Activated naive CD4-positive, alpha-beta T cell treated with anti-CD3 and anti-CD28 coated beads for 36 hours (primary cell): ENCODE measurements at regions of chr11 and their contacts with region 1.

Region 1: DNA sequence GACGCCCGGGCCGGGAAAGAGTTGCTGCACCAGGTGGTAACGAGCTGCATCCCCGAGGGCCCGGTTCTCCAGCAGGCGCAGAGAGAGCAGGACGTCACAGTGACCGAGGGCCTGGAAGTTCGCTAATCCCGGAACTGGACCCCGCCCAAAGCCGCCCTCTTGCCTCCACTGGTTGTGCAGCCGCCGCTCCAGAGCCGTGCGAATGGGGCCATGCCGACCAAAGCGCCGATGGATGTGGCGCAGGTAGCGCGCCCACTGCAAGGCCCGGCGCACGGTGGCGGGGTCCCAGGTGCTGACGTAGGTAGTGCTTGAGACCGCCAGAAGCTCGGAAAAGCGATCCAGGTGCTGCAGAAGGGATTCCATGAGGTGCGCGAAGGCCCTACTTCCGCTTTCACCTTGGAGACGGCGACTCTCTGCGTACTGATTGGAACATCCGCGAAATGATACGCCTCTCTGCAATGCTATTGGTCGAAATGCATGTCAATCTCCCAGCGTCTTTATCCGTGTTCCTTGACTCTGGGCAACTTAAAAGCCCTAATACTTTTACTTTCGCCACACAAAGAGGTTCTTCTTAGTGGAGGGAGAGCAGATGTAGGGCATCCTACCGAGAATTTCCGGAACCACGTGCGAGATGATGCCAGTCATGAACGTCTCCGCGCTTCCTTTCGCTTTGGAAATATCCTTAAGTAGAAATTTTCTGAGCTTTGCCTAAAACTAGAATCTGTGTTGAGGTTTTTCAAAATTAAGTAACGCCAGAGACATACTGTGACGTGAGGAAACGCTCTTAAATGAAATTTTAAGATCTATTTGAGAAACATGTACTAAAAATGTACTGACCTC is at the start of gene FANCF:
- DNase-seq: peak; percentile 98
- H3K4me3 Mint-ChIP-seq: peak within 1 kb of the TSS; percentile 98
- H3K27ac Mint-ChIP-seq: peak within 1 kb of the TSS; percentile 97
- H3K4me1 Mint-ChIP-seq: peaks cover 41% of the 10 kb centered on the region
- H3K27me3 Mint-ChIP-seq: no peaks in the 10 kb centered on the region
- total RNA-seq, gene FANCF: 7.9 to 9.0 TPM

Region 2: GRCh38 chr11:22432291-22433093 is 193.2 kb before region 1 on chr11:
- CTCF ChIA-PET with region 1: no interaction called
- intact Hi-C with region 1: loop called (anchors 2 kb)
- DNase-seq: peak; percentile 39
- H3K4me3 Mint-ChIP-seq: peak overlapping the region; percentile 56
- H3K27ac Mint-ChIP-seq: no peak overlapping the region
- H3K4me1 Mint-ChIP-seq: peaks cover 17% of the 10 kb centered on the region
- H3K27me3 Mint-ChIP-seq: peaks cover 40% of the 10 kb centered on the region

Region 3: GRCh38 chr11:22635689-22636088 is 10.0 kb after region 1 on chr11:
- CTCF ChIA-PET with region 1: no interaction called
- intact Hi-C with region 1: no loop called
- DNase-seq: no peak
- H3K4me3 Mint-ChIP-seq: no peak overlapping the region
- H3K27ac Mint-ChIP-seq: no peak overlapping the region
- H3K4me1 Mint-ChIP-seq: no peaks in the 10 kb centered on the region
- H3K27me3 Mint-ChIP-seq: peaks cover 3% of the 10 kb centered on the region

Region 4: GRCh38 chr11:22690871-22691270 is 65.2 kb after region 1 on chr11:
- CTCF ChIA-PET with region 1: no interaction called
- intact Hi-C with region 1: loop called (anchors 2 kb)
- DNase-seq: peak; percentile 55
- H3K4me3 Mint-ChIP-seq: peak overlapping the region; percentile 52
- H3K27ac Mint-ChIP-seq: peak overlapping the region; percentile 65
- H3K4me1 Mint-ChIP-seq: peaks cover 16% of the 10 kb centered on the region
- H3K27me3 Mint-ChIP-seq: no peaks in the 10 kb centered on the region

Region 5: GRCh38 chr11:22730319-22730718 is 104.7 kb after region 1 on chr11:
- CTCF ChIA-PET with region 1: no interaction called
- intact Hi-C with region 1: loop called (anchors 1 kb)
- DNase-seq: peak; percentile 11
- H3K4me3 Mint-ChIP-seq: no peak overlapping the region
- H3K27ac Mint-ChIP-seq: no peak overlapping the region
- H3K4me1 Mint-ChIP-seq: no peaks in the 10 kb centered on the region
- H3K27me3 Mint-ChIP-seq: no peaks in the 10 kb centered on the region

Region 6: DNA sequence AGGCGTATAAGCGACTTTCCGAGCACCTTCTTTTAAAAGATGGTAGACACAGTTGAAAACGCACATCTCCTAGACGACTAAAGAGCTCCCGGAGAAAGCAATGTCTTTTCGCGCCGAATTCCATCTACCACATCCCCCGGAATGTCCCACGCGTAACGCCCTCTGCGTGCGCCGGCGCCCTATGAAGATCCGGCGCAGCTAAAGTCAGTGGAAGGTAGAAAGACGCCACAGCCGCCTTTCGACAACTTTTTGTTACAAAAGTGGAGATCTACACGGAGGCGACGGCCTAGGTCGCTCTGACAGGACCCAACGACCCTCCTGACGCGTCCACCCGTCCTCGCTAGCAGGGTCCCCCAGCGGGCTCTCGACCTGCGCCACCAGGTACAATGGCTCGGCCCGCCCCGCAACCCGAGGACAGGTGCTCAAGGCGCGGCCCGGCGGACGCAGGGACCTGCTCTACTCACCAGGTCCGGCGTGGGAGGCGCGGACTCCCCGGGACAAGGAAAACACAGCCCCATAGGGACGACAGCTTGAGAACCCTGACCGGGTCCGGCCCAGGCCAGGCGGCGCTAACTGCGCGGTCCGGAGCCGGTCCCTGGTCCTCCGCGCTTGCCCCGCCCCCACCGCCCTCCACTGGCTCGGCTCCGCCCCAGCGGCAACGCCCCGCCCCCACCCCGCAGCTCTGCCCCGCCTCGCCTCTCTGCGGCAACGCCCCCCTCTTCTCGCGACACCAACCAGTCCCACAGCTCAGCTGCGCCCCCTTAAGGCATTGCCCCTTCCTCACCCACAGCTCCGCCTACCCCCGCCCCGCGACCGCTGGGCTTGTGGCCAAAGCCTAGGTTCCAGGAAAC is 203.8 kb after region 1 on chr11 and contains the start of gene SVIP:
- CTCF ChIA-PET with region 1: interaction called, 7 read pairs
- intact Hi-C with region 1: loop called (anchors 1 kb)
- DNase-seq: peak; percentile 96
- H3K4me3 Mint-ChIP-seq: peak within 1 kb of the TSS; percentile 88
- H3K27ac Mint-ChIP-seq: peak within 1 kb of the TSS; percentile 86
- H3K4me1 Mint-ChIP-seq: peaks cover 13% of the 10 kb centered on the region
- H3K27me3 Mint-ChIP-seq: no peaks in the 10 kb centered on the region
- total RNA-seq, gene SVIP: 81.2 to 84.2 TPM